Sciatic nerve (tissue), 2 donors: ENCODE measurements at regions of chr3 and their contacts with region 1.

Region 1: GRCh38 chr3:56251343-56251945 is 216.8 kb downstream of the ERC2 start:
- DNase-seq: peak; percentile 62
- ATAC-seq: peak; percentile 62

Region 2: DNA sequence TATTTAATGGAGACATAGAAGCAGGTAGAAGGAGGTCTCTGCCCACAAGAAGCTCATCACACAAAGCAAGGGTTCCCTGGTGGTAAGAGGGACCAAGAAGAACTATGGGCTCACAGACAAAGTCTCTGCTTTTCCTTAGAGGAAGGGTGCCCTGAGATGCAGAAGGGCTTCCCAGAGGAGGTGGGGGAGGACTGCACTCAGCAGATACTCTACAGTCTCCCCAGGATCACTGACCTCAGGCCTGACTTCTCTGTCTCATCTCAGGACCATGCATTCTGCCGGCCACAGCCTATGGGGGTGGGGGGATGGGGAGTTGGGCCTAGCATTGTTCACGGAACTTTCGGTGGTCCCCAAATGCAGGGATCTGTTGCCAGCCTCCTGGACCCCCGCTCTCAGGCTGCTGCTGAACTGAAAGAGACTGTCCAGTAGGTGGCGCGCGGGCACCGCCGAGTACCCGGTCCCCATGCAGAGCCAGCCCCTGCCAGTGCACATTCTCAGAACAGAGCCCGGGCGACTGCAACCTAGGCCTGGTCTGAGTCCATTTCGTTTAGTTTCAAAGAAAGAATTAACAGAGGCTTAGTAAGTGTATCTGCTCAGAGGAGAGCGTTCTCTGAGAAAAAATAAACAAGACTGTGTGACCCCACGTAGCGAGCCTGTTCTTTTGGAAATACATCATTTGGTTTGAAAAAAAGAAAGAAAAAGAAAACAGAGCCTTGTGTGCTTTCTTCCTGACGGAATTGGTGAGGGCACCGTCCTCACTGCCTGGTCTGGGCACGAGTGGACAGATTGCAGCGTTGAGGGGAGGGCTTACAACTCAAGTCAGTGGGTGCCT is 1397.7 kb before region 1 on chr3:
- intact Hi-C with region 1: loop called (anchors 10 kb)
- DNase-seq: peak; percentile 89
- ATAC-seq: peak; percentile 93

Region 3: GRCh38 chr3:56076746-56077145 is 174.7 kb before region 1 on chr3:
- intact Hi-C with region 1: no loop called
- DNase-seq: no peak
- ATAC-seq: no peak